ENCODE measurements at regions of chr11 and their contacts with region 1.

Region 1: DNA sequence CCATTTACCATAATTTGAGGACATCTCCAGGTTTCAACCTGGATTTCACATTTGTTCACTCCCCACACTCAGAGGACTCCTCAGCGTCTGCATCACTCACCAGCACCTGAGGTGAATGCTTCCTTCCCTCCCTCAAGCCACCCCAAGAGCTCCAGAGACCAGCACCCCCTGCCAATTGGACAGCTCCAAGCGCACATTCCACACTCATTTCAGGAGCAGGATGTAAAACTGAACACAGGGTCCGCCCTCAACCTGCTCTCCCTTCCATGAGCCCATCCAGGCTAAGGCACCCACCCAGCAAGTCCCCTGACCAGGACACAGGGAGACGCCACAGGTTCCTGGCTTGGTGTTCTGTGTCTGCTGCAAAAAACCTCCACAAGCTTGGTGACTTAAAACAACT is 3.9 kb downstream of the SCGB1D1 start:
- DNase-seq: no peak
- H3K4me3 ChIP-seq: no peak overlapping the region
- H3K27ac ChIP-seq: no peak overlapping the region
- H3K4me1 ChIP-seq: no peaks in the 10 kb centered on the region
- H3K27me3 ChIP-seq: peaks cover 0 to 10% of the 10 kb centered on the region in 2 donors
- CTCF ChIP-seq: no peak
- POLR2A ChIP-seq: no peak

Region 2: DNA sequence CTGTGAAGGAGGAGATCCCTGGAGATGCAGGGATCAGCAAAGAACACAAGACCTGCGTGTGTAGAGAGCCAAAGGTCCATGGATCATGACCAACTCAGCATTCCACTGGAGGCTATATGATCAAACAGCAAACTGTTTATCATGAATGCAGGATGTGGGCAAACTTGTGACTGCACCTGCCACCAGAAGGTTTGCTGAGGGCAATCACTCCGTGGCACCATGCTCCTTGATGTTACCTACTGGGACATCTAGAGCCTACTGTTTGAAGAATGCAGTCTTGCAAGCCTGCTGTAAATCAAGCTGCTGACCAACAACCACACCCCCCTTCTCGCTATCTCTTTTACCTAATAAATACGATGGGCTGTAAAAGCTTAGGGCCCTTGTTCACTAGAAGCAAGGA is 57.7 kb after region 1 on chr11:
- intact Hi-C with region 1: loop called (anchors 2 kb)
- DNase-seq: no peak
- H3K4me3 ChIP-seq: no peak overlapping the region
- H3K27ac ChIP-seq: no peak overlapping the region
- H3K4me1 ChIP-seq: no peaks in the 10 kb centered on the region
- H3K27me3 ChIP-seq: no peaks in the 10 kb centered on the region
- CTCF ChIP-seq: no peak
- POLR2A ChIP-seq: no peak